ENCODE measurements at regions of chr5 and their contacts with region 1.

Region 1: GRCh38 chr5:39283231-39283818 is 64.0 kb upstream of the FYB1 start:
- DNase-seq: peak; percentile 81
- ATAC-seq: peak; percentile 100
- H3K4me3 Mint-ChIP-seq: no peak overlapping the region
- H3K27ac Mint-ChIP-seq: no peak overlapping the region
- H3K4me1 Mint-ChIP-seq: peaks cover 22% of the 10 kb centered on the region
- H3K27me3 Mint-ChIP-seq: peaks cover 3% of the 10 kb centered on the region

Region 2: DNA sequence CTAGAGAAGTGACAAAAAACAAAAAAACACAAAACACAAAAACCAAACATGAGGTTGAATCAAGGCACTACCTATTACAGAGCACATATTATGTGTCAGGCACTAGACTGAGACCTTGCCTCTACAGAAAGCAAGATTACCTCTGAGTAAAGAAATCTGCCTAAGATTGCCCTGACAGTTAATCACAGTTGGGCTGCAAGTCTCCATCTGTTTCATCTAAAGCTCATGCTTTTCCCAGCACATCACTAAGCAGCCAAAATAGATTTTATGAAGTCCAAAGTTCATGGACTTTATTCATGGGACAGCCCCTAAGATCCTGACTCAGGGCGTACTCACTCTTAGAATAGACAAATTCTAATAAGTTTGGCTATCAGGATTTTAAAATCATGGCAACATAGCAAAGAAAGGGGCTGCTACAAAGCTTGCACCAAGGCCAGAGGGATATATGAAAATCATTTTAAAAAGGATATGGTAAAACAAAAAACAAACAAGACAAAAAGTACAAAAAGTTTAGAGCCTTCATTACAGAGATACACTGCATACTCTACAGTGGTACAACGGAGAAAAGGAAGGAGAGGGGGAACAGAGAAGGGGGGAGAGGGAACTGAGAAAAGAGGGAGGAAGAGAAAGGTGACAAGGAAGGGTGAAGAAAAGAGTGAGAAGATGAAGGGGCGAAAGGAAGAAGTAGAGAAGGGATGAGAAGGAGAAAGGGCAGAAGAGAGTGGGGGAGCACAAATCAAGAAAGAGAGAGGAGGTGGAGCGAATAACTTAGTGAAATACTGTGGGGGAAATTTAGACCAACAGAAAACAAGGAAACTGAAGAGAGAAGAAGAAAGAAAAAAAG is 267.4 kb before region 1 on chr5:
- CTCF ChIA-PET with region 1: no interaction called
- POLR2A ChIA-PET with region 1: no interaction called
- DNase-seq: no peak
- ATAC-seq: no peak
- H3K4me3 Mint-ChIP-seq: no peak overlapping the region
- H3K27ac Mint-ChIP-seq: peak overlapping the region; percentile 17
- H3K4me1 Mint-ChIP-seq: peaks cover 17% of the 10 kb centered on the region
- H3K27me3 Mint-ChIP-seq: no peaks in the 10 kb centered on the region

Region 3: DNA sequence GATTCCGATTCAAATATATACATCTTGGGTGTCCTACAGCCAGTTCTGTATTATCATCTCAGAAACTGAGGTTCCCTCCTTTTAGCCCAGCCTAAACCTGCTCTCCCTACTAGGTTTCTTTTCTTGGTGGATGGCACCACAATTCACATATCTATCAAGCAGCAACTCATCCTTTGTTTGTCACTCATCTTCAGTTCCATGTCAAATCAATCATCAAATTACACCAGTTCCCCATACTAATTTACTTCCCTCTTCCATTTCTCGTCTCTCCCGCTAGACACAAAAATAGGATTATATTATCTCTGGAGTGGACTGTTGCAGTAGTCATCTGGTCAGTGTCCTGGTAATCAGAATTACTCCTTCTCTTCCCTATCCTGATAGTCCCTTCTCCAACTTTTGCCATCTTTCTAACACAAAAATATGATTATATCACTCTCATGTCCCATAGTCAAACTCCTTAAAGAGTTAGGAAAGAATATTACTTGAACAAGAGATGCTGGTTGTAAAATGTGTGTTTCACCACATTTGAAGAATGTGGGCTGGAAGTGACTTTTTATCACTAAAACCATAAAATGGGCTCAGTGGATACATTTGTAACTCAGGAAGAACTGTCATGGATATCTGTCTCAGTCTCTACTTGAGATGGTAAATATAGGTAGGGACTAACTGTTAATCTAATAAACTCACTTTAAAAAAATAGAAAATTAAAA is 140.0 kb before region 1 on chr5:
- CTCF ChIA-PET with region 1: interaction called, 12 read pairs
- POLR2A ChIA-PET with region 1: no interaction called
- DNase-seq: no peak
- ATAC-seq: no peak
- H3K4me3 Mint-ChIP-seq: no peak overlapping the region
- H3K27ac Mint-ChIP-seq: no peak overlapping the region
- H3K4me1 Mint-ChIP-seq: no peaks in the 10 kb centered on the region
- H3K27me3 Mint-ChIP-seq: no peaks in the 10 kb centered on the region

Region 4: GRCh38 chr5:39164529-39165402 is 118.6 kb before region 1 on chr5:
- CTCF ChIA-PET with region 1: interaction called, 12 read pairs
- POLR2A ChIA-PET with region 1: no interaction called
- DNase-seq: no peak
- ATAC-seq: peak; percentile 81
- H3K4me3 Mint-ChIP-seq: peak overlapping the region; percentile 69
- H3K27ac Mint-ChIP-seq: peak overlapping the region; percentile 84
- H3K4me1 Mint-ChIP-seq: peaks cover 86% of the 10 kb centered on the region
- H3K27me3 Mint-ChIP-seq: no peaks in the 10 kb centered on the region

Region 5: DNA sequence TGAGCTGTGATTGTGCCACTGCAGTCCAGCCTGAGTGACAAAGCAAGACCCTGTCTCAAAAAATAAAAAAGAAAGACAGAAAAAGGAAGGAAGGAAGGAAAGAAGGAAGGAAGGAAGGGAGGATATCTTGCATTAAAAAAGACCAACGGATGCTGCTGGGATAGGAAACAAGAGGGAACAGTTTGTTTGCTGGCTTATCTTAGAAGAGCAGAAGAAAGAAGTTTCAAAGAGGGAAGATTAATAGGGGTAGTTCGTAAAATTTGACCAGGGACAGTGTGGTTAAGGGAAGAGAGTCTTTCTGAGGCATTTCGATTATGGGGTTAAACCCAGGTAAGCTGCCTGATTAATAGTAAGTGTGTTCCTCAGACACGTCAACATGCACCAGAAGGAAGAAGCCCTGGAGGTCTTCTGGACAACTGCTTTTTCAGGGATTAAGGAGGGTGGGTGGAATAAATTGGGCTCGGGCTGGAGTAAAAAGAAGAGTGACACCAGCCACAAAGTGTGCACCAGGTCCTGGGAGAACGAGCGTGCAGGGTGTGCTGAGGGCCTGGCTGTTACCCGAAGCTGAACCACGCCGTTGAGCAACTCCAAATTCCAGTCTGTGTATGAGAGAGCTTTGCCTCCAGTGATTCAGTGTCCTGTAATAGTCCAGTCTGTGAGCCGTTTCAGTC is 88.7 kb before region 1 on chr5:
- CTCF ChIA-PET with region 1: interaction called, 49 read pairs
- POLR2A ChIA-PET with region 1: no interaction called
- DNase-seq: peak; percentile 45
- ATAC-seq: peak; percentile 24
- H3K4me3 Mint-ChIP-seq: peak overlapping the region; percentile 79
- H3K27ac Mint-ChIP-seq: peak overlapping the region; percentile 87
- H3K4me1 Mint-ChIP-seq: peaks cover 75% of the 10 kb centered on the region
- H3K27me3 Mint-ChIP-seq: no peaks in the 10 kb centered on the region

Region 6: DNA sequence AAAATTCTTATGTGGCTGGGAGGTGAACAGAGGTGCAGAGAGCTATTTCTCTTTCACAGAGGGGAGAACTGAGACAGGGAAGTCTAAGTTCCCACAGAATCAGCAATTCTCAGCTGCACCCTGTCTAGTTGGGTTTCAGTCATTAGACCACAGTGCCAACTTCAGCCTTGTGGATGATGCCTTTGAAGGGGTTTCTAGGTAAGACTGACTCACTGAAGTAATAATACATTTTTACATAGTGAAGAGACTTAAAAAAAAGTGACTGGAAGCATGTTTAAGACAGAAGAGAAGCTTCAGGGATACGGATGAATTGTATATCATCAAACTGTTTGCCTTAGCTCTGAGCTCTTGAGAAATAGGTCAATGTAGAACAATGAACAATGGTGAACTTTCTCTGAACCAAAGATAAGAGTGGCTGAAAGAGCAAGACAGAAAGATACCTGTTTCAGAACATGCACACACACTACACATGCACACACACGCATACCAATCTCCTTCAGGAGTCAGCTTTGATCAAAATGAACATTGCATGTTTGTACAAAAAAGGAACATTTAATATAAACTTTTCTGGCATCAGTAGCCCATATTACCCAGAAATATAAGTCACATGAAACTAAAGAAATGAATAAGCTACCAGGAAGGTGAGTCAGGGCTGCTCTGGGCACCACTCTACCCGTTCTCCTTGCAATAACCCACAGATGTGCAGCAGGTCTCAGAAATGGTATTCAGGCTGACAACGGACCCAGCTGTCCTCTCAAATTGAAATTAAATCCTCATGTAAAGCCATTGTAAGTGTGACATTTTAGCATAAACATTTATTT is 51.4 kb before region 1 on chr5:
- CTCF ChIA-PET with region 1: interaction called, 21 read pairs
- POLR2A ChIA-PET with region 1: no interaction called
- DNase-seq: no peak
- ATAC-seq: peak; percentile 86
- H3K4me3 Mint-ChIP-seq: peak overlapping the region; percentile 29
- H3K27ac Mint-ChIP-seq: peak overlapping the region; percentile 73
- H3K4me1 Mint-ChIP-seq: peaks cover 18% of the 10 kb centered on the region
- H3K27me3 Mint-ChIP-seq: no peaks in the 10 kb centered on the region

Region 7: DNA sequence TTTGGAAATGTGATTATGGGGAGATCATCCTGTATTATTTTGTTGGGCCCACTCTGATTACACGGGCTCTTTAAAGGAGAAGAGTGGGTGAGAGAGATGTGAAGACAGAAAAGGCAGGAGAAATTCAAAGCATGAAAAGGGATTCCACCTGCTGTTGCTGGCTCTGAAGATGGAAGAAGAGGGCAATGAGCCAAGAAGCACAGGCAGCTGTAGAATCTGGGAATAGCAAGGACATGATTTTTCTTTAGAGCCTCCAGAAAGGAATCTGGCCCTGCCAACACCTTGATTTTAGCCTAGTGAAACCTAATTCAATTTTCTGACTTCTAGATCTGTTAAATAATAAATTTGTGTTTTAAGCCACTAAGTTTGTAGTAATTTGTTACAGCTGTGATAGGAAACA is 69.6 kb after region 1 on chr5:
- CTCF ChIA-PET with region 1: no interaction called
- POLR2A ChIA-PET with region 1: no interaction called
- DNase-seq: no peak
- ATAC-seq: no peak
- H3K4me3 Mint-ChIP-seq: no peak overlapping the region
- H3K27ac Mint-ChIP-seq: no peak overlapping the region
- H3K4me1 Mint-ChIP-seq: no peaks in the 10 kb centered on the region
- H3K27me3 Mint-ChIP-seq: no peaks in the 10 kb centered on the region